ENCODE measurements at regions of chr1 and their contacts with region 1.

Region 1: GRCh38 chr1:230066466-230067404 is at the start of gene GALNT2:
- DNase-seq: peak; percentile 54 to 94
- H3K4me3 ChIP-seq: peak within 1 kb of the TSS; percentile 86 to 94
- H3K27ac ChIP-seq: peak within 1 kb of the TSS; percentile 93 to 94
- H3K4me1 ChIP-seq: peaks cover 0 to 31% of the 10 kb centered on the region in 2 donors
- H3K27me3 ChIP-seq: no peaks in the 10 kb centered on the region
- CTCF ChIP-seq: no peak
- total RNA-seq, gene GALNT2: 129 TPM

Region 2: GRCh38 chr1:229558571-229559335 is 508.0 kb before region 1 on chr1 and contains the start of gene ABCB10:
- intact Hi-C with region 1: loop called (anchors 2 kb)
- DNase-seq: peak; percentile 87 to 98
- H3K4me3 ChIP-seq: peak within 1 kb of the TSS; percentile 91 to 94
- H3K27ac ChIP-seq: peak within 1 kb of the TSS; percentile 85 to 94
- H3K4me1 ChIP-seq: peaks cover 3 to 38% of the 10 kb centered on the region in 2 donors
- H3K27me3 ChIP-seq: no peaks in the 10 kb centered on the region
- CTCF ChIP-seq: peak; percentile 81 to 89 (median 87)
- total RNA-seq, gene ABCB10: 25.2 TPM

Region 3: GRCh38 chr1:230002164-230002803 is 64.5 kb before region 1 on chr1:
- intact Hi-C with region 1: loop called (anchors 5 kb)
- DNase-seq: no peak
- H3K4me3 ChIP-seq: no peak overlapping the region
- H3K27ac ChIP-seq: no peak overlapping the region
- H3K4me1 ChIP-seq: peaks cover 6 to 30% of the 10 kb centered on the region in 2 donors
- H3K27me3 ChIP-seq: no peaks in the 10 kb centered on the region
- CTCF ChIP-seq: no peak

Region 4: GRCh38 chr1:230104395-230105244 is 37.9 kb after region 1 on chr1:
- intact Hi-C with region 1: loop called (anchors 1 kb)
- DNase-seq: peak; percentile 97 to 100
- H3K4me3 ChIP-seq: peak overlapping the region; percentile 2 to 43
- H3K27ac ChIP-seq: peak overlapping the region; percentile 87 to 90
- H3K4me1 ChIP-seq: peaks cover 14 to 65% of the 10 kb centered on the region in 2 donors
- H3K27me3 ChIP-seq: no peaks in the 10 kb centered on the region
- CTCF ChIP-seq: peak in 2 of 3 experiments; percentile 11 to 21

Region 5: GRCh38 chr1:230215031-230215430 is 148.3 kb after region 1 on chr1:
- intact Hi-C with region 1: loop called (anchors 2 kb)
- DNase-seq: peak in 1 of 2 donors; percentile 90
- H3K4me3 ChIP-seq: peak overlapping the region in 1 of 2 donors; percentile 24
- H3K27ac ChIP-seq: peak overlapping the region; percentile 93 to 95
- H3K4me1 ChIP-seq: peaks cover 12 to 68% of the 10 kb centered on the region in 2 donors
- H3K27me3 ChIP-seq: no peaks in the 10 kb centered on the region
- CTCF ChIP-seq: peak; percentile 68 to 87 (median 82)

Region 6: GRCh38 chr1:230231774-230232145 is 165.0 kb after region 1 on chr1:
- intact Hi-C with region 1: no loop called
- DNase-seq: peak in 1 of 2 donors; percentile 91
- H3K4me3 ChIP-seq: peak overlapping the region; percentile 10 to 53
- H3K27ac ChIP-seq: peak overlapping the region; percentile 81 to 82
- H3K4me1 ChIP-seq: peaks cover 6 to 35% of the 10 kb centered on the region in 2 donors
- H3K27me3 ChIP-seq: no peaks in the 10 kb centered on the region
- CTCF ChIP-seq: no peak

Region 7: GRCh38 chr1:230310381-230311163 is 243.8 kb after region 1 on chr1:
- intact Hi-C with region 1: loop called (anchors 5 kb)
- DNase-seq: peak in 1 of 2 donors; percentile 89
- H3K4me3 ChIP-seq: no peak overlapping the region
- H3K27ac ChIP-seq: no peak overlapping the region
- H3K4me1 ChIP-seq: peaks cover 0 to 2% of the 10 kb centered on the region in 2 donors
- H3K27me3 ChIP-seq: no peaks in the 10 kb centered on the region
- CTCF ChIP-seq: peak; percentile 86 to 93 (median 90)

Region 8: GRCh38 chr1:230327892-230328284 is 261.2 kb after region 1 on chr1:
- intact Hi-C with region 1: no loop called
- DNase-seq: no peak
- H3K4me3 ChIP-seq: no peak overlapping the region
- H3K27ac ChIP-seq: no peak overlapping the region
- H3K4me1 ChIP-seq: no peaks in the 10 kb centered on the region
- H3K27me3 ChIP-seq: no peaks in the 10 kb centered on the region
- CTCF ChIP-seq: no peak

Region 9: DNA sequence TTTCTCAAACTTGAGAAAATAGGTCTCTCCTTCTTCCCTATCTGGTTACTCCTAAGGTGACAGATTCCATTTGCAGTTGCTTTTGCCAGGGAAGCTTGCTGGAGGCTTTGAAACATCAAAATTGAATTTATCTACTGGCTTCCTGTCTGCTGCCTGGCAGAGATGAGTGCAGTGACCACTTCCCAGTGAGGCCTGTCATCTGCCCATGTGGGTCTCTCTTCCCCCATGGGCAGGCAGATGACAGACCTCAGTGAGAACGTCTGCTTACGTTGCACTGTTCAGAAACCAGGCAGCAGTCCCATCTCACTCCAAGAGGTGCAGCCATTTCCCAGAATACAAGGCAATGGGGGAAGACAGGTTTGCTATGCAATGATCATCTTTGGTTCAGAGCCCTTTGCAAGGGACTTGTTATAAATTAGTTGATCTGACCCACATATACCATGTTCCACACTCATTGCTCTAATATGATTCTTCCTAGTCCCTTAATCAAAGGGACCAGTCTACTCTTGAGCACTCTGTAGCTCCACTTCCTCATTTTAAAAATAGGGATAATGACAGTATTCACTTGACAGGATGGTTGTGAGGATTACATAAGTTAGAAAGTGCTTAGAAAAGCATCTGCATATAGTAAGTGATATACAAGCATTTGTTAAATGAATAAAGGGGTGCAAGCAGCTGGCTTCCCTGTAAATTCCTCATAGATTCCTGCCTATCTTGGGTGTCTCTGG is 348.8 kb after region 1 on chr1:
- intact Hi-C with region 1: no loop called
- DNase-seq: peak in 1 of 2 donors; percentile 50
- H3K4me3 ChIP-seq: no peak overlapping the region
- H3K27ac ChIP-seq: no peak overlapping the region
- H3K4me1 ChIP-seq: no peaks in the 10 kb centered on the region
- H3K27me3 ChIP-seq: no peaks in the 10 kb centered on the region
- CTCF ChIP-seq: no peak